ENCODE measurements at regions of chr11 and their contacts with region 1.

Region 1: DNA sequence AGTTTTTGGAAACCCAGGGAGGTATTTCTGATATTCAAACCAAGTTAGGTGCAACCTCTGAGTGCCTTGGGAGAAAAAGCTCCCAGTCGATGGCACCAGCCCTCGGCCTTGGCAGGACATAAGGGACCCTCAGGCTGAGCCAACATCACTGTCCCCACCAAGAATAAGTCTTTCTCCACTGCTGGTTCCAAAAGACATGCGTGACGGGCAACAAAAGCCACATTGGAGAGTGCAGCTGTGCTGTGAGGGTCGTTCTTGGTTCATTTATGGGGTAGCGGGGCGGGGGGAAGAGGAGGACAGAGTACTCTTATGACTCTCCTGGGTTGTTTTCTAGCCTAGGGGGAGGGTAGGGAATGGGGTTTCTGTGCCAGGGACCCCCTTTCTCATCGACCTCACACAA is 11.2 kb upstream of the TPCN2 start:
- DNase-seq: no peak

Region 2: GRCh38 chr11:69048718-69049489 is 11.4 kb after region 1 on chr11 and contains the start of gene TPCN2:
- CTCF ChIA-PET with region 1: no interaction called
- POLR2A ChIA-PET with region 1: interaction called, 11 read pairs
- DNase-seq: peak; percentile 100